A549 (cell line): ENCODE measurements at regions of chr2 and their contacts with region 1.

Region 1: GRCh38 chr2:45637440-45637839 is 14.0 kb upstream of the PRKCE start:
- DNase-seq: no peak
- ATAC-seq: no peak
- H3K4me3 ChIP-seq: no peak overlapping the region
- H3K27ac ChIP-seq: no peak overlapping the region
- H3K4me1 ChIP-seq: no peaks in the 10 kb centered on the region
- CTCF ChIP-seq: no peak
- EP300 ChIP-seq: no peak
- POLR2A ChIP-seq: no peak
- RAD21 ChIP-seq: no peak

Region 2: DNA sequence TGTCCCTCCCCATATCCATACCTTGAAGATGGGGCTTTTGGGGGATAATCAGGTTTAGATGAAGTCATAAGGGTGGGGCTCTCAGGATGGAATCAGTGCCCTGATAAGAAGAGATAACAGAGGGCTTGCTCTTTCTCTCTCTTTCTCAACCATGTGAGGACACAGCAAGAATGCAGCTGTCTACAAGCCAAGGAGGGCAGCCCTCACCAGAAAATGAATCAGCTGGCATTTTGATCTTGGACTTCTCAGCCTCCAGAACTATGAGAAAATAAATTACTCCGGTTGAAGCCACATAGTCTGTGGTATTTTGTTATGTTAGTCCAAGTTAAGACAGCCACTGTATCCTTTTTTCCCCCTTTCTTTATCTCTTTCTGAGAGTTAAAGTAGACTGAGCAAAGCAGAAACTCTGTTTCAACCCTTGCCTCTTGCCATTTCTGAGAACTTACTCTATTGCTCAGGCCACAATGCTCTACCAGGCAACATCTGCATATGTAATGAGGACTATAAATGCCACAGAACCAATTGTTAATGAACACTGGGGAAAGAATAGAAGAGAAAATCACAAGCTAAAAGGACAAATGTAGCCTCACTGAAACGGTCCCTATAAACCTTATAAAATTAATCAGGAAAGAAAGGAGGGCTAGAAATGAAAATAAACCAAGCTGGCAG is 83.2 kb before region 1 on chr2:
- CTCF ChIA-PET with region 1: no interaction called
- POLR2A ChIA-PET with region 1: no interaction called
- DNase-seq: no peak
- ATAC-seq: 0 out of 6 replicates have a peak, but pooled peaks of 1 of the 2 experiments have one; percentile 30
- H3K4me3 ChIP-seq: no peak overlapping the region
- H3K27ac ChIP-seq: no peak overlapping the region
- H3K4me1 ChIP-seq: no peaks in the 10 kb centered on the region
- CTCF ChIP-seq: no peak
- EP300 ChIP-seq: no peak
- POLR2A ChIP-seq: no peak
- RAD21 ChIP-seq: no peak

Region 3: DNA sequence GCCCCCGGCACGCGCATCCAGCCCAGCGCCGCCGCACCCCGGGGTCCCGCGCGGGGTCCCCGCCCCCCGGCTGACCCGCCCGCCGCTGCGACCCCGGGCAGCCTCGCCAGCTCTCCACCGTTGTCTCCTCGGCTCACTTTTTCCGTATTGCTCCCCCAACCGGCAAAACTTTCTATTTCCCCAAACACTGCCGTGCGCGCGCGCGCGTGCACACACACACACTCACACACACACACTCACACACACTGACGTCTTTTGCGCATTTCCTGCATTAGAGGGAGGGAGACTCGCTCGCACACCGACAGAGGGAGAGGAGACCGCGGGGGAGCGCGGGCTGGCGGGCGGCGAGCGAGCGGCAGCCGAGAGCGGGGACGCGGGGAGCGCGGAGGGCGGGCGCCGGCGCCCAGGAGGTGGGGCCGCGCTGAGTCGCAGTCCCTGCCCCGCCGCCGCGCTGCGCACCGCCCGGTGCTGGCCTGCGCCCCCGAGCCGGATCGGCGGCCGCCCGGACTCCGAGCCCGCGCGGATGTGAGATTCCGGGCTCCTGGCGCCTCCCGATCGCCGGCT is 13.5 kb after region 1 on chr2:
- CTCF ChIA-PET with region 1: interaction called, 18 read pairs
- POLR2A ChIA-PET with region 1: no interaction called
- DNase-seq: peak; percentile 72 to 97
- ATAC-seq: peak; percentile 84 to 86
- H3K4me3 ChIP-seq: peak overlapping the region; percentile 83
- H3K27ac ChIP-seq: peak overlapping the region; percentile 86 to 90
- H3K4me1 ChIP-seq: peaks cover 23% of the 10 kb centered on the region
- CTCF ChIP-seq: peak; percentile 58
- EP300 ChIP-seq: peak in 1 of 2 experiments; percentile 18; a peak in 1 of 5 replicates
- POLR2A ChIP-seq: peak; percentile 74
- RAD21 ChIP-seq: peak; percentile 20 to 54; a peak in 3 of 5 replicates